B cell (primary cell): ENCODE measurements at regions of chr10 and their contacts with region 1.

Region 1: DNA sequence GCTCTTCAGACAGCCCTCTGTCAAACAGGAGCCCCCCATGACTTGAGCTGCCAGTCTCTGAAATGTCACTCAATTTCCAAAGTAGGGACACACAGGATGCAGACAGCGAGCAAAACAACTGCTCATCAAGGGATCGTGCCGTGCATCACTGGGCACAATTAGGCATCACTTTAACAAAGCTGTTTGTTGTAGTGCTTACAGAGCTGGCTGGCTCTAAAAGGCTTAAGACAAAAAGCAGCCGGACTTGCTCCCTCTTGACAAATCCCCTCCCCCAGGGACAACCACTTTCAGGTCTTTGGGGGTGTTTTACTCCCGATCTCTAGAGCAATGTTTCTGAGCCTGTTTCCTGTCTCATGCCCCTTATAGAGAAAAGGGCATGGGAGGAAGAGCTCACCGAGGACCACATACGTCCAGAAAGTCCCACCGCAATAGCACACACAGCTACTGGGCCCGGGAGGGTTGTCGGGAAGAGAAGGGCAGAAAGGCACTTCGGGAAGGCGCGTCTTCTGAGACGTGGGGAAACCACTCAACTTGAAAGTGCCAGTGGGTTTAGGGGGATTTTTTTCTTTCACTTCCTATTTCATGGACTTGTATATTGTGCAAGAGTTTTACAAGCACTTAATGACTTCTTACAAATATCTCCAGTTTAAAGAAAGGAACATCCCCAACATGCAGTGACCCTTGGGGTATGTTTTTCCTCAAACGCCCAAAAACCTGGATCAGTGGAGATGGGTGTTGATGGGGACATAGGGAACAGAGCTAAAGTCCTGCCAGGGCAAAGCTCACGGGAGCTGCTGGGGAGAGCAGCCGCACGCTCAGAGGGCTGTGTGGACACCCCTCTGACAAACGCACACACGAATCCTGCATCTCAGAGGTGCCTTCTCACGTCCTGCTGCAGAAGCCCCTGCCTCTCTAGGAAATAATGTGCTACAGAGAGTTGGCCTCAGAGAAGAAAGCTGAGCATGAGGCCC is 27.1 kb downstream of the LRRC20 start:
- DNase-seq: peak; percentile 81
- ATAC-seq: peak; percentile 81
- H3K4me3 ChIP-seq: peak overlapping the region; percentile 18 to 71 (median 48)
- H3K4me3 Mint-ChIP-seq: peak overlapping the region; percentile 90
- H3K27ac ChIP-seq: no peak overlapping the region
- H3K27ac Mint-ChIP-seq: peak overlapping the region; percentile 87
- H3K4me1 ChIP-seq: peaks cover 16 to 28% of the 10 kb centered on the region in 2 donors
- H3K4me1 Mint-ChIP-seq: peaks cover 26% of the 10 kb centered on the region
- H3K27me3 ChIP-seq: peaks cover 0 to 4% (median 0%) of the 10 kb centered on the region in 4 experiments
- H3K27me3 Mint-ChIP-seq: peaks cover 3% of the 10 kb centered on the region
- CTCF ChIP-seq: no peak

Region 2: GRCh38 chr10:70331486-70332268 is 23.7 kb before region 1 on chr10:
- CTCF ChIA-PET with region 1: interaction called, 6 read pairs
- POLR2A ChIA-PET with region 1: interaction called, 6 read pairs
- intact Hi-C with region 1: loop called (anchors 2 kb)
- DNase-seq: peak; percentile 83
- ATAC-seq: peak; percentile 88
- H3K4me3 ChIP-seq: peak overlapping the region in 1 of 5 experiments; percentile 33
- H3K4me3 Mint-ChIP-seq: peak overlapping the region; percentile 63
- H3K27ac ChIP-seq: no peak overlapping the region
- H3K27ac Mint-ChIP-seq: peak overlapping the region; percentile 70
- H3K4me1 ChIP-seq: peaks cover 24% of the 10 kb centered on the region in 2 donors
- H3K4me1 Mint-ChIP-seq: peaks cover 29% of the 10 kb centered on the region
- H3K27me3 ChIP-seq: peaks cover 0 to 57% (median 21%) of the 10 kb centered on the region in 4 experiments
- H3K27me3 Mint-ChIP-seq: peaks cover 53% of the 10 kb centered on the region
- CTCF ChIP-seq: no peak

Region 3: GRCh38 chr10:70379581-70380176 is 24.3 kb after region 1 on chr10:
- CTCF ChIA-PET with region 1: no interaction called
- POLR2A ChIA-PET with region 1: no interaction called
- intact Hi-C with region 1: no loop called
- DNase-seq: no peak
- ATAC-seq: no peak
- H3K4me3 ChIP-seq: no peak overlapping the region
- H3K4me3 Mint-ChIP-seq: no peak overlapping the region
- H3K27ac ChIP-seq: no peak overlapping the region
- H3K27ac Mint-ChIP-seq: no peak overlapping the region
- H3K4me1 ChIP-seq: peaks cover 7 to 14% of the 10 kb centered on the region in 2 donors
- H3K4me1 Mint-ChIP-seq: peaks cover 12% of the 10 kb centered on the region
- H3K27me3 ChIP-seq: peaks cover 0 to 23% (median 3%) of the 10 kb centered on the region in 4 experiments
- H3K27me3 Mint-ChIP-seq: peaks cover 3% of the 10 kb centered on the region
- CTCF ChIP-seq: peak; percentile 43